ENCODE measurements at regions of chr12 and their contacts with region 1.

Region 1: DNA sequence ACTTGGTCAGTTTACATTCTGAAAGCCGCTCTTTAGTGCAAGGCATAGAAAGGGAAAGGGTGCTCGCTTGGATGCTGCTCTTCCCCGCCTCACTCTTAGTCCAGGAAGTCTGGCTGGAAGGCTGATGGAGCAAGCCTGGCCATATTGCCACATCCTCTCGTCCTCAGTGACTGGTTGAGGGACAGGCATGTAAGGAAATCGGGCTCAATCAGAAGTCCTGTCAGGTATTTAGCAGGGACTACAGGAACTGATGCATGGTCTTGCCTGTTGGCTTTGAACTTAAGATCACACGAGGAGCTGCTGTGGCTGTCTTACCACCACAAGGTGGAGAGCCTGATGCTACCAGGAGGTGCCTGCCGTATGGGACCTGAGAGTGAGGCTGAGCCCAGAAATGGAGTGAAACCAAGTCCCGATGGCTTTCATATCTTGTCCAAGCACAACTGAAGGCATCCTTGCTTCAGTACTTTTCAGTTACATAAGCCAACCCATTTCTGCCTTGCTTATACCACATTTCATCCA is 10.7 kb upstream of the C12orf75 start:
- DNase-seq: no peak
- ATAC-seq: no peak
- H3K4me3 ChIP-seq: no peak overlapping the region
- H3K4me3 Mint-ChIP-seq: no peak overlapping the region
- H3K27ac ChIP-seq: no peak overlapping the region
- H3K27ac Mint-ChIP-seq: no peak overlapping the region
- H3K4me1 ChIP-seq: no peaks in the 10 kb centered on the region
- H3K4me1 Mint-ChIP-seq: no peaks in the 10 kb centered on the region
- H3K27me3 ChIP-seq: no peaks in the 10 kb centered on the region
- H3K27me3 Mint-ChIP-seq: no peaks in the 10 kb centered on the region
- CTCF ChIP-seq: no peak

Region 2: DNA sequence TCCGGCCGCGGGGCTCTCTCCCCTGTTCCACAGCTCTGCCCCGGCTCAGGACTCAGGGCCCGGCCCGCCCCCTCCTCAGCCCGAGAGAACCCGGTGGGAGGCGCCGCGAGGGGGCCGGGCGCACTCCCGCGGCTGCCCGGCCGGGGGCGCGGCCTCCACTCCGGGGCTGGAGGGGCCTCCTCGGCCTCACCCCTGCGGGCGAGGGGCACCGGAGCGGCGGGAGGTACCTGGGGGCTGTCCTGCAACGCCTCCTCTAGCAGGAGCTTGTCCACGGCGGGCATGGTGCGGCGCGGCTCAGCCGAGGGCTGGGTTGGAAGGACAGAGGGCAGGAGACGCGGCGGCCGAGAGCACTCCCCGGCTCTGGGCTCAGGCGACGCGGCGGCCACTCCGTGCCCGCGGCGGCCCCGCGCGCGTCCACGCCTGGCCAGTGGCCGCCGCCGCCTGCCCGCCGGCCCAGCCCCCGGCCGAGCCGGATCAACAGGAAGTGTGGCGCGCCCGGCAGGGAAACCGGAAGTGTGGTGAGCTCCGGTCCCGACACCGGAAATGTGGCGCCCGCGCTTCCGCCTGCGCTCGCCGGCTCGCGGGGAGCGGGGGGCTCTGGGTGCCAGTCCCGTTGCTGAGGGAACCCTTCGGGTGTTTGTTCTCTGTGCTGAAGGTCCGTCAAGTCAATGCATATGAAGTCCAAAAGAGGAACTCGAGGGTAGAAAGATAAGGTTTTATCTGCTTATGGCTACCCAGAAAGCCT is 83.8 kb before region 1 on chr12 and contains the start of gene APPL2:
- CTCF ChIA-PET with region 1: no interaction called
- POLR2A ChIA-PET with region 1: no interaction called
- intact Hi-C with region 1: no loop called
- DNase-seq: peak; percentile 92
- ATAC-seq: peak; percentile 81
- H3K4me3 ChIP-seq: peak within 1 kb of the TSS; percentile 51 to 90 (median 71)
- H3K4me3 Mint-ChIP-seq: peak within 1 kb of the TSS; percentile 95
- H3K27ac ChIP-seq: peak within 1 kb of the TSS; percentile 70 to 95
- H3K27ac Mint-ChIP-seq: peak within 1 kb of the TSS; percentile 94
- H3K4me1 ChIP-seq: peaks cover 44 to 49% of the 10 kb centered on the region in 2 donors
- H3K4me1 Mint-ChIP-seq: peaks cover 38% of the 10 kb centered on the region
- H3K27me3 ChIP-seq: no peaks in the 10 kb centered on the region
- H3K27me3 Mint-ChIP-seq: no peaks in the 10 kb centered on the region
- CTCF ChIP-seq: peak; percentile 66
- total RNA-seq, gene APPL2: 57.7 and 58.3 TPM in 2 replicates

Region 3: DNA sequence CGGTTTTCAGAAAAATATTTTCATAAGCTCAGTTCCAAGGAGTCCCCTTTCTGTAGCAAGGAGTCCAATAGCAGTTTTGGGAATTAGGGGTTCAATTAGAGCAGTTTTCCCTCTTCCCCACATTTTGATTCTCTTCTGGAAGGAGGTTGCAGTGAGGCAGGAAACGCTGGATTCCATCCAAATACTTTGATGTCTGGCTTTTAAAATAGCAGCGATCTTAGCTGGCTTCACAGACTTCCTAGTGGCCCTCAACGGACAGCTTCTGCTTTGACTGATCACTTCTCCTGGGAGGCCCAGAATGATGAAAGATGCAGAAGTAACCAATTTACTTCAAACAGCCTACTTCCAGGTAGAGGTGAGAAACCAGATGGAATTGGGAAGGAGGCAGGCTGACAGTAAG is 73.8 kb after region 1 on chr12:
- CTCF ChIA-PET with region 1: no interaction called
- POLR2A ChIA-PET with region 1: interaction called, 13 read pairs
- intact Hi-C with region 1: no loop called
- DNase-seq: no peak
- ATAC-seq: no peak
- H3K4me3 ChIP-seq: no peak overlapping the region
- H3K4me3 Mint-ChIP-seq: no peak overlapping the region
- H3K27ac ChIP-seq: no peak overlapping the region
- H3K27ac Mint-ChIP-seq: no peak overlapping the region
- H3K4me1 ChIP-seq: no peaks in the 10 kb centered on the region
- H3K4me1 Mint-ChIP-seq: no peaks in the 10 kb centered on the region
- H3K27me3 ChIP-seq: no peaks in the 10 kb centered on the region
- H3K27me3 Mint-ChIP-seq: no peaks in the 10 kb centered on the region
- CTCF ChIP-seq: no peak